Cardiac septum (tissue), 1 donor: ENCODE measurements at regions of chr20 and their contacts with region 1.

Region 1: GRCh38 chr20:17898548-17898994 is 70.0 kb downstream of the SNX5 start:
- DNase-seq: no peak

Region 2: GRCh38 chr20:17504898-17505635 is 393.5 kb before region 1 on chr20:
- intact Hi-C with region 1: loop called (anchors 2 kb)
- DNase-seq: peak; percentile 82

Region 3: DNA sequence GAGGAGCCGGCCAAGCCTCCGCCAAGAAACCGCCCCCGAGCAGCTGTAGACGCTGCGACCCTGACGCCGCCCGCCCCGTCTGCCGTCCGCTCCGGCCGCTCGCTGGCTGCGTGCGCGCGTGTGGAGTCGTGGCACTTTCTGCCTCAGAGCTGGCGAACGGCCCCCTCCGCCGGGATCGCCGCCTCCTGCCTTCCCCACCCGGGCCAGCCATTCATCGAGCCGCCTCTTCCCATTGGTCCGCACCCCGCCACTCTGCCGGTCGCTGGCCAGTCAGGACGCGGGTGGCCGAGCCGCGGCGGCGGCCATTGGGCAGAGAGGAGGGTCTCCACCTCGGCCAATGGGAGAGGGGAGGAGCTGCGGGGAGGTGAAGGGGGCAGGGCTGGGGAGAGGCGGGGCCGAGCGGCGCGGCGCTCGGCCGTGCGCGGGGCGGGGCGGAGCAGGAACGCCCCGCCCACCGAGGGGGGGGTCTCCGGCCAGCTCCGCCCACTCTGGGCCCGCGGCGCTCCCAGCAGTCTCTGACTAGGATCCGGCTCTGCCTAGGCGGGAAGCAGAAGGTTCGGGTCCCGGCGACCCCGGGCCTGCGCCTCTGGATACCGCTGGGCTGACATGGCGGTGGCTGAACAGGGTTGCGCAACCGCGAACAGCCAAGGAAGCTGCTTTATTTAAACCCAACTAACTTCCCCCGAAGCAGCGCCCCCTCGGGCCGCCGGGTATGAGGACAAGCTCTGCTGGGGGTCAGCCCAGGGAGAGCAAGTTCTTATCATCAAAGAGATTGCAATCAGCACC is 216.3 kb before region 1 on chr20 and contains the start of gene RRBP1:
- intact Hi-C with region 1: loop called (anchors 1 kb)
- DNase-seq: peak; percentile 100
- total RNA-seq, gene RRBP1: 46.7 TPM

Region 4: DNA sequence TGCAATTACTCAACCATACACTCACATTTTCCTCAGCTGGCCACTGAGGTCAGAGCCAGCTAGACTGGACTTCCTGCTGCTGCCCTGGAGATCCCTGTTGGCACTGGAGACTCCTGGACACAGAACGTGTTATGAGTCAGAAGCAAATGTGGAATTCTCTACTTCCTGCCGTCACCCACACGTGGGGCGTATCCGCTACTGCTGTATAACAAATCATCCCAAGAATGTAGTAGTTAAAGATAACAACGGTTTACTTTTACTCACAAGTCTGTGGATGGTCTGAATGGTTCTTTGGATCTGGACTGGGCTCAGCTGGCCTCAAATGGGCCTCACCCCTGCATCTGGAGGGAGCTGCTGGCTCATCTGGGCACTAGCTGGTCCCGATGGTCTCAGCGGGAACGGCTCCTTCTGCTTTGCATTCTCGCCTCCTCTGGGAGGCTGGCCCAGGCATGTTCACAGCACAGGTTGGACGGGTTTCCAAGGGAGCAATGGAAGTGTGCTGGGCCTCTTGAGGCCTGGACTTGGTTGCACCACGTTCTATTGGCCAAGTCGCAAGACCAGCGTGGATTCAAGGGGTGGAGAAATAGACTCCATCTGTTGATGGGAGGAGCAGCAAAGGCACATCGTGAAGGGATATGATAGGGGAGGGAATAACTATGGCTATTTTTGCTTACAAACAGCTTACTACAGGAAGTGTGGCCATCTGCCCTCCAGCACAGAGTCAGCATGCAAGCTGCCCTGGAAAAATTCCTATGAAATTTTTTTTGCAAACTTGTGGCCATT is 48.5 kb before region 1 on chr20:
- intact Hi-C with region 1: loop called (anchors 5 kb)
- DNase-seq: peak; percentile 85

Region 5: DNA sequence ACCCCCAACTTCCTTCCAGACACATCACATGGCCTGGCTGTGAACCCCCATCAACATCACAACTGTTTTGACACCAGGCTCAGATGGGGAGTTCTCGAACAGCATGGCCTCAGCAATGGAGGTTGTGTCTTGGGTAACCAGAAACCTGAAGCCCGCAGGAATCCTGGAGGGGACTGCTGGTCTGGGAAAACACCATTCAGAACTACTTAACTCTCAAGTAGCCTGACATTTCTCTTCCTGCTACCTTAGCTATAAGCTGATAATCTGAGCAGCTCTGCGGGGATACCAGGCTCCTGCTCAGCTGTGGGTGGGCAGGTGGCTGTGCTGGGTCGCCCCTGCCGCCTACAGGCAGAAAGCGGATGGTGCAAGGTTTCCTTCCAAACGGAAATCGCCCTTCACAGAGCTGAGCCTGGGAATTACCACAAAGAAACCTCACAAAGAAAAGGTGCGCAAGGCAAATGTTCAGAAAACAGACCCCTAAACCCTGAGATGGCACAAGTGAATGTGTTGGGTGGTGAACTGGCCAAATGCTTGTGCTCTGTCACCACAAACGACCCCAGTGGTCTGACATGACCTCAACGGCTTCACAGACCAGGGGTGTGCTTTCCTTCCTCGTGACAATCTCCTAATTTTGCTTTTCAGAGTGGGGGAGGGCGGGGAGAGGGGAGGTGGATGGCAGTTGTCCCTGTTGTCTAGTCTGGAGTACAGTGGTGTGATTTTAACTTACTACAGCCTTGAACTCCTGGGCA is 40.5 kb after region 1 on chr20:
- intact Hi-C with region 1: loop called (anchors 5 kb)
- DNase-seq: no peak